GM12878 (cell line): ENCODE measurements at regions of chr12 and their contacts with region 1.

Region 1: GRCh38 chr12:14403711-14404196 is 38.3 kb downstream of the ATF7IP start:
- DNase-seq: peak; percentile 49
- ATAC-seq: peak; percentile 75
- H3K4me3 ChIP-seq: peak overlapping the region; percentile 13; the same call in 1 of the 2 replicates
- H3K27ac ChIP-seq: peak overlapping the region; percentile 77
- H3K4me1 ChIP-seq: peaks cover 3% of the 10 kb centered on the region; the same call in 1 of the 2 replicates
- H3K27me3 ChIP-seq: no peaks in the 10 kb centered on the region
- CTCF ChIP-seq: no peak
- EP300 ChIP-seq: no peak
- POLR2A ChIP-seq: no peak
- RAD21 ChIP-seq: no peak

Region 2: DNA sequence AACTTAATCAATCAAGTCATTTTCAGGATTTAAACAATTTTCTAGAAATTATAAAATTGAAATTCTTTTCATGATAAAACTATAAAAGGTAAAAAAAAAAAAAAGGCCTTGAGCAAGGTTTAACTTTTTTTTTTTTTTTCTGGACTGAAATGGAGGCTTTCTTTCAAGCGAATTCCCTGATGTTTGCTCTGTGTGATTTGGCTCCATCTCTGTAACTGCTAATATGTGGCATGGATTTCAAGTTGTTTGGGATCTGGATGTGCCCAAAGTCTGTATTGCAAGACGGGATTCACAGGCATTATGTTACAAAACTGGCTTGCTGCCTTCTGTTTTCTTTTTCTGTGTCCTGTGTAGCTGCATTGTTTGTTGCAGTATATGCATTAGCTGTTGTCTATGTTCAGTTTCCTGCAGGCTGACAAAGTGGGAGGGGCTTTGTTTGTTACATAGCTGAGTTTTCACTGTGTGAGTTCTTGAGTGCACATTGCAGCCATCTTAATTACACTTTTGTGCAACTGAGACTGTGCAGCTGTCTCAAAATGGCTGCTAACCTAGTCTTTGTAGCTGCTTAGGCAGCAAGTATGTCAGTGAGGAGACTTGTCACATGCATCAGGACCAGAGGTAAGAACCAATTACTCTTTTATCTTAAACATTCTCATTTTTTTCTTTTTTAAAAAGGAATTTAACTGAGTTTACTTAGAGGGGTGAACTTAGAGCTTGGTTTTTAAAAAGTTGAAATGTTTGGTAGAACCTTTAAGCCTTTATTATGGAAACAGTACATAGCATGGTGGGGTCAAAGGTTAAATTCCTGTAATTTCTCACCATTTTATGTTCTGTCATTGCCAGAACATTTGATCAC is 18.7 kb before region 1 on chr12:
- CTCF ChIA-PET with region 1: interaction called, 8 read pairs
- POLR2A ChIA-PET with region 1: interaction called, 6 read pairs
- RAD21 ChIA-PET with region 1: interaction called, 21 read pairs
- SMC1A ChIA-PET with region 1: interaction called, 29 read pairs
- in situ Hi-C with region 1: no loop called
- intact Hi-C with region 1: no loop called
- DNase-seq: peak; percentile 92
- ATAC-seq: peak; percentile 90
- H3K4me3 ChIP-seq: peak overlapping the region; percentile 18; the same call in 1 of the 2 replicates
- H3K27ac ChIP-seq: peak overlapping the region; percentile 63
- H3K4me1 ChIP-seq: peaks cover 5% of the 10 kb centered on the region
- H3K27me3 ChIP-seq: no peaks in the 10 kb centered on the region
- CTCF ChIP-seq: no peak
- EP300 ChIP-seq: no peak; a peak in 1 of 4 replicates
- POLR2A ChIP-seq: peak; percentile 46; the same call in 1 of the 2 replicates
- RAD21 ChIP-seq: no peak